AG04449 (cell line): ENCODE measurements at regions of chr4 and their contacts with region 1.

Region 1: GRCh38 chr4:118865091-118865708 is 23.5 kb upstream of the SYNPO2 start:
- DNase-seq: no peak
- H3K4me3 ChIP-seq: no peak overlapping the region
- CTCF ChIP-seq: peak; percentile 70

Region 2: GRCh38 chr4:118351851-118352827 is 513.1 kb before region 1 on chr4:
- CTCF ChIA-PET with region 1: no interaction called
- POLR2A ChIA-PET with region 1: no interaction called
- DNase-seq: no peak
- H3K4me3 ChIP-seq: peak overlapping the region; percentile 81
- CTCF ChIP-seq: no peak

Region 3: DNA sequence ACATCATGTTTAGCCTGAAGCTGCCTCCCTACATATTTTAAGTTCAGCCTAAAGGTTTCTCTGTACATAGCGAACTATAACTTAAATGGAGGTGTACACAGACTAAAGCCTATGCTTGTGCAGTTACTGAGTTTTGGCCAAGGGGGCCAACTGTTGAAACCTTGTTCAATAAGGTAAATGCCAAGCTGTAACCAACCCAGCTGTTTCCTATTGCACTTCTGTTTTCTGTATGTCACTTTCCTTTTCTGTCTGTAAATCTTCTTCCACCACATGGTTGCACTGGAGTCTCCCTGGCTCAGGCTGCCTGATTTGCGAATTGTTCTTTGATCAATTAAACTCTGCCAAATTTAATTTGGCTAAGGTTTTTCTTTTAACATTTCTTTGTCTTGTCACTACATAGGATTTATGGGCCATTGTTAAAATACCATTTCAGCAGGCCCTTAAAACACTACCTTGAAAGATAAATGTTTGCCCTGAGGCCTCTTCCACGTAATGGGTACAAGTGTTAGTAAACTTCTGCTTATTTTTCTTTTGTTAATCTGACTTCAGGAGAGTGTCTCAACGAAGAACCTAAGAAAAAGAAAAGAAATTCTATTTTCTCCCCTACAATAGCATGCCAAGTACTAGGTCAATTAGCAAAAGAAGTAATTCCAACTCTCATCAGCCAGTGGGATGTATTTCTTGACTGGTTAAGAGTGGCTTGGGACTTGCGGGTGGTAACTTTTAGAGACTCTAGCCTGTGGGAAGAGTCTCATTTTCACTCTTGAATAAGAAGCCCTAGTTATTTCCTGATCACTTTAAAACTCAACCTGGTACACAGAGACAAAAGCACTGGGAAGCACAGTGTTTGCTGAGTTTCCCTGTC is 466.7 kb before region 1 on chr4:
- CTCF ChIA-PET with region 1: no interaction called
- POLR2A ChIA-PET with region 1: no interaction called
- DNase-seq: no peak
- H3K4me3 ChIP-seq: no peak overlapping the region
- CTCF ChIP-seq: no peak

Region 4: GRCh38 chr4:118842055-118842454 is 23.1 kb before region 1 on chr4:
- CTCF ChIA-PET with region 1: interaction called, 18 read pairs
- POLR2A ChIA-PET with region 1: no interaction called
- DNase-seq: no peak
- H3K4me3 ChIP-seq: no peak overlapping the region
- CTCF ChIP-seq: no peak

Region 5: DNA sequence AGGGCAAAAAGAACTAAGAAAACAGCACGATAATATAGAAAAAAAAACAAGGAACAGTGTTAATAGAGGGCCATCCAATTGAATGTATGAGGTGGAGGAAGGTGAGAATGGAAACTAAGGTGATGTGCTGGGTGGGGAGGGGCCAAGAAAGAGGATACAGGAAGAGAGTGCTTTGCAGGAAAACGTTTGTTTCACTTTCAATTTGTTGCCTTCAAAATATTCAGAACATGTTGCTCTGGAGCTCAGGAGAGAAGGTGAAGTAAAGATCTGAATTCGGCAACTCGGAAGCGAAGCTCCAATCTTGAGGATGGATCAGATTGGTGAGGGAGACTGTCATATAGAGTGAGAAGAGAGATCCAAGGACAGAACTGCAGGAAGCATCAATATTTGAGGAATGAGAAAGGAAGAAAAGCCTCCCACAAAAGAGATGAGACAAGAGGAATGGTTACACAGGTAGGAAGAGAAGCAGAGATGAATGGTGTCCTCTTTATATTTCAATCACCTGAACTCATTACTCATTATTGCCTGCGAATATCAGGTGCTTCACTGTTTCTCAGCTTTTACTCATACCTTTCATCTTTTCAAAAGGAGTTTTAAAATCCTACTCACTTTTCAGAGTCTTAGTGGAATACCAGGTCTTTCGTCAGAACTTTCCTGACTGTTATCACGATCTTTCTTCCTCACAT is 14.6 kb before region 1 on chr4:
- CTCF ChIA-PET with region 1: interaction called, 66 read pairs
- POLR2A ChIA-PET with region 1: no interaction called
- DNase-seq: no peak
- H3K4me3 ChIP-seq: peak overlapping the region; percentile 0; the same call in 1 of the 2 replicates
- CTCF ChIP-seq: no peak

Region 6: DNA sequence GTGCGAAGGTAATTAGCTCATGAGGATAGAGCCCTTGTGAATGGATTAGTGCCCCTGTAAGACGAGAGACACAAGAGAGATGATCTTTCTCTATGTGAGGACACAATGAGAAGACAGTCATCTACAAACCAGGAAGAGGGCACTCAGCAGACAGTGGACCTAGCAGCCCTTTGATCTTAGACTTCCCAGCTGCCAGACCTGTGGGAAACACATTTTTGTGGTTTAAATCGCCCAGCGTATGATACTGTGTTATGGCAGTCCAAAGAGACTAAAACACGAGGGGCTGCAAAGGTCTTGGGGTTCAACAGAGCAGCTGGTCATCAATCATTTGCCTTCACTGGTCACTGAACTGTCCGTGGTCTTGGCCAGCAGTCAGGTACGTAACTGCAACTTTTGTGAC is 14.2 kb after region 1 on chr4:
- CTCF ChIA-PET with region 1: interaction called, 19 read pairs
- POLR2A ChIA-PET with region 1: no interaction called
- DNase-seq: no peak
- H3K4me3 ChIP-seq: no peak overlapping the region
- CTCF ChIP-seq: no peak